ENCODE measurements at regions of chr6 and their contacts with region 1.

Region 1: GRCh38 chr6:43263314-43264178 is 20.3 kb downstream of the TTBK1 start:
- DNase-seq: peak; percentile 42
- ATAC-seq: peak; percentile 97
- H3K4me3 ChIP-seq: no peak overlapping the region
- H3K27ac ChIP-seq: no peak overlapping the region
- H3K4me1 ChIP-seq: peaks cover 6% of the 10 kb centered on the region
- H3K27me3 ChIP-seq: no peaks in the 10 kb centered on the region
- CTCF ChIP-seq: peak; percentile 95

Region 2: DNA sequence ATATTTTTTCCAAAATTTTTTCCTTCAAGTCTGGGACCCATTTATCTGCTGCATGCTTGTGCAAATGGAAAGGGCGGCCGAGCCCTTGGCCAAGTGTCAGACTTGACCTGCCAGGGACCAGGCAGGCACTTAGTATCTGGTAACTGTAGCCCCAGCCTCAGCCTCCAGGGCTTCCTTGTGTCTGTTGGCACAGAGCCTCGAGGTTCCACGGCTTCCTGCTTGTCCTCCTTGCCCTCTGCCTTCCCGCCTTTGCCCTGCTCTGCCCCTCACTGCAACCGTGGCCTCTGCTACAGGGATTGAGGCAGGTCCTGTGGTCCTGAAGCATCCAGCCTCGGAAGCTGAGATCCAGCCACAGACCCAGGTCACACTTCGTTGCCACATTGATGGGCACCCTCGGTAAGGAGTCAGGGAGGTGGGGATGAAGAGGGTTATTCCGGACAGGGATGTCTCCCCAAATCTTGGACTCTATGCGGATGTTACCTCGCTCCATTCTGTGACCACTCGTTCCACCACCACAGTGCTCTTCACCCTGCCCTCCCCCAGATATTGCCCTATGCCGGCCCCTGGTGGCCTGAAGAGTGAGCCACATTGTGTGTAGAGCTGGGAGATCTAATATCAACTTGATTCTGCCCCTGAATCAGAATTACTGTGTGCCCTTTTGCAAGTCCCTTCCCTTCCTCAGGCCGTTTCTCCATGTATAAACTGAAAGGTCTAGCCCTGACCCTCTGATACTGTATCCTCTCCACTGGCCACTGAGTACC is 133.9 kb before region 1 on chr6:
- CTCF ChIA-PET with region 1: no interaction called
- POLR2A ChIA-PET with region 1: no interaction called
- in situ Hi-C with region 1: no loop called
- intact Hi-C with region 1: no loop called
- DNase-seq: no peak
- ATAC-seq: peak; percentile 91
- H3K4me3 ChIP-seq: no peak overlapping the region
- H3K27ac ChIP-seq: peak overlapping the region; percentile 44
- H3K4me1 ChIP-seq: peaks cover 33% of the 10 kb centered on the region
- H3K27me3 ChIP-seq: no peaks in the 10 kb centered on the region
- CTCF ChIP-seq: no peak; the same call in 1 of the 2 replicates

Region 3: GRCh38 chr6:43247113-43247999 is 16.2 kb before region 1 on chr6:
- CTCF ChIA-PET with region 1: interaction called, 10 read pairs
- POLR2A ChIA-PET with region 1: no interaction called
- in situ Hi-C with region 1: no loop called
- intact Hi-C with region 1: no loop called
- DNase-seq: no peak
- ATAC-seq: peak; percentile 97
- H3K4me3 ChIP-seq: peak overlapping the region; percentile 42 to 62
- H3K27ac ChIP-seq: no peak overlapping the region
- H3K4me1 ChIP-seq: peaks cover 9% of the 10 kb centered on the region
- H3K27me3 ChIP-seq: peaks cover 21% of the 10 kb centered on the region
- CTCF ChIP-seq: no peak

Region 4: GRCh38 chr6:43334466-43335095 is 71.0 kb after region 1 on chr6:
- CTCF ChIA-PET with region 1: interaction called, 10 read pairs
- POLR2A ChIA-PET with region 1: no interaction called
- in situ Hi-C with region 1: no loop called
- intact Hi-C with region 1: loop called (anchors 2 kb)
- DNase-seq: peak; percentile 46
- ATAC-seq: peak; percentile 90
- H3K4me3 ChIP-seq: no peak overlapping the region
- H3K27ac ChIP-seq: no peak overlapping the region
- H3K4me1 ChIP-seq: no peaks in the 10 kb centered on the region
- H3K27me3 ChIP-seq: no peaks in the 10 kb centered on the region
- CTCF ChIP-seq: peak; percentile 67

Region 5: GRCh38 chr6:43604174-43604573 is 340.6 kb after region 1 on chr6:
- CTCF ChIA-PET with region 1: no interaction called
- POLR2A ChIA-PET with region 1: no interaction called
- in situ Hi-C with region 1: no loop called
- intact Hi-C with region 1: no loop called
- DNase-seq: no peak
- ATAC-seq: no peak
- H3K4me3 ChIP-seq: no peak overlapping the region
- H3K27ac ChIP-seq: no peak overlapping the region
- H3K4me1 ChIP-seq: no peaks in the 10 kb centered on the region
- H3K27me3 ChIP-seq: no peaks in the 10 kb centered on the region
- CTCF ChIP-seq: no peak

Measured in Panc1 (cell line).